GM10248 (cell line): ENCODE measurements at regions of chr4 and their contacts with region 1.

Region 1: DNA sequence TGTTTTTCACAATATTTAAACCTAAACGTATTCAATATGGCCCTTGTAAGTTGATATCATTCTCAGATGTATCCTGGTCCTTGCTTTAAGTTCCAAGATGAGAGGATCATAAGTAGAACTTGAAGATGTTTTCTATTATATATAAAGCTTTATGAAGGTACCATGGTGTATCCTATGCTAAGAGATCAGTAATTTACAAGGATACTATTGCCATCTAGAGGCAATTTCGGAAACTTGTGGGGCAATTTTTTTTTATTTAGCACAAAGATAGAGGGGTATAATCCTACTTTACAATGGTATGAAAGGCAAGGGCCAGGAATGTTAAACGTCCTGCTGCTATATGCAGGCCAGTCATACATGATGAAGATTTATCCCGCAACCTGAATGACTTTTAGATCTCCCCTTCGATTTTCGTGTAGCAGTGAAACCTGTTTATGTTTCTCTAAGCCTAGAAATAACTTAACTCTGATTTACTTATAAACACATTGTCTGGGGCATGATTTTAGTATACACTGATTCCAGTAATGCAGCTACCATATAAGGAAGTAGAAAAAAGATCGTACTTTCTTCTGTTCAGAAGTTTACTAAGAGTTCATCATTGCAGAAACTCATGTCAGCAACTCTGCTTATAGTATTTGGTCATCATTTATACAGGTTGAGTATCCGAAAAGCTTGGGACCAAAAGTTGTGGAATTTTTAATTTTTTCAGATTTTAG is 2.6 kb downstream of the SLC25A31 start:
- DNase-seq: peak; percentile 56
- CTCF ChIP-seq: peak; percentile 30

Region 2: DNA sequence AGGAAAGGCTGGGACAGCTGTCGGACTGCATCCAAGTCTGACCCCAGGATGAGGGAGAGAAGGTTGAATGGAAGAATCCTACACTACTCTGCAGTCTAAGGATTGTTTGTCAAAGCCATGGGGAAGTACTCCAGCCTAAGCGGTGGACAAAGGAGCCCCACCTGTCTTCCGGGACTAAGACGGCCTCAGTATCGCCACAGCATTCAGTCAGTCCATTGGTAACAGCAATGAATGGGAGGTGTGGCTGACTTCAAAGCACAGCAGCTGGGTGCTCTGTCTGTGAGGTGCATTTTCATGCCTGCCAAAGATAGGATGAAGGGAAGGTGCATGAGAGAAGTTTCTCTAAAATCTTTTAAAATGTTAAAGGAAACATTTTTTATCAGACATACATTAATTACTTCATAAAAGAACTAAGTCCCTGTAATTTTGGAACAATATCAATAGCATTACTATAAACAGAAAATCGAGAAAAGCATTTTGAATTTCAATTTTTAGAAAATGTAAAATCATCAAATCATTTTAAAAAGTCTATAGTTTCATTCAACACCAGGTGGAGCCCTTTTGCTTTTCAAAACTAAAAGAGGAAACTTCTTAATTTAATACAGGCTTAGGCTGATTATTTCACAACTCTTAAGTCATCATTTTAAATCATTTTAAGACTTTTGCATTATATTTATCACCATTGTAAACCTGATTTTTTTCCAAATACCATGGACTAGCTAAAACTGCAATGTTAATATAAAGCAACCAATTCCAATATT is 127.6 kb before region 1 on chr4:
- CTCF ChIA-PET with region 1: interaction called, 102 read pairs
- POLR2A ChIA-PET with region 1: no interaction called
- DNase-seq: no peak
- CTCF ChIP-seq: peak; percentile 43

Region 3: GRCh38 chr4:127616898-127617297 is 115.9 kb before region 1 on chr4:
- CTCF ChIA-PET with region 1: interaction called, 11 read pairs
- POLR2A ChIA-PET with region 1: no interaction called
- DNase-seq: no peak
- CTCF ChIP-seq: no peak

Region 4: GRCh38 chr4:127747883-127748282 is 15.1 kb after region 1 on chr4:
- CTCF ChIA-PET with region 1: interaction called, 51 read pairs
- POLR2A ChIA-PET with region 1: no interaction called
- DNase-seq: no peak
- CTCF ChIP-seq: no peak

Region 5: GRCh38 chr4:127788517-127788916 is 55.7 kb after region 1 on chr4:
- CTCF ChIA-PET with region 1: no interaction called
- POLR2A ChIA-PET with region 1: no interaction called
- DNase-seq: no peak
- CTCF ChIP-seq: peak; percentile 27